ENCODE measurements at regions of chr3 and their contacts with region 1.

Region 1: GRCh38 chr3:184185461-184186308 is at the start of gene ABCF3:
- DNase-seq: peak; percentile 97
- ATAC-seq: peak; percentile 94
- H3K4me3 ChIP-seq: peak within 1 kb of the TSS; percentile 80 to 95 (median 93)
- H3K27ac ChIP-seq: peak within 1 kb of the TSS; percentile 85
- H3K4me1 ChIP-seq: peaks cover 25% of the 10 kb centered on the region
- H3K27me3 ChIP-seq: no peaks in the 10 kb centered on the region; a peak in 1 of 5 replicates
- CTCF ChIP-seq: no peak
- EP300 ChIP-seq: 0 out of 4 replicates have a peak, but pooled peaks of 1 of the 2 experiments have one; percentile 17
- POLR2A ChIP-seq: peak; percentile 82 to 92
- RAD21 ChIP-seq: peak; percentile 46; the same call in 1 of the 2 replicates
- total RNA-seq, gene ABCF3: 32.7 and 38.8 TPM in 2 replicates

Region 2: DNA sequence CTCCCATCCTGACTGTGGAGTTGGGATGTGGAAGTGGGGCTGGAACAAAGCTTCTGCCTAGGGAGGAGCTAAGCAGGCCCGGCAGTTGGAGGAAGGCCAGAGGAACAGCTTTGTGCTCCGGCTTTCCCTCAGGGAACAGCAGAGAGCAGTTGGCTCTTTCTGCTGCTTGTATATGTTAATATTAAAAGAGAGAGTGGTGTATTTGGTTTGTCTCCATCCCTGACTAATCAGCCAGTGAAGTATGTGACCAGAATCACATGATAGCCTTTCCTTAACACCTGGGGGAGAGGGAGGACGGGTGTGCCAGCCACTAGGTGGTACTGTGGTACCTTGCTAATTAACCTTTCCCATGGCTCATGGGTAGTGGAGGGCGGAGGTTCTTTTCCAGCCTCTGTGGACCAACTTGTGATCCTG is 40.6 kb before region 1 on chr3:
- CTCF ChIA-PET with region 1: no interaction called
- POLR2A ChIA-PET with region 1: interaction called, 3 read pairs
- in situ Hi-C with region 1: no loop called
- intact Hi-C with region 1: loop called (anchors 5 kb)
- DNase-seq: peak; percentile 49
- ATAC-seq: peak; percentile 80
- H3K4me3 ChIP-seq: no peak overlapping the region
- H3K27ac ChIP-seq: no peak overlapping the region
- H3K4me1 ChIP-seq: peaks cover 7% of the 10 kb centered on the region
- H3K27me3 ChIP-seq: no peaks in the 10 kb centered on the region
- CTCF ChIP-seq: peak; percentile 81
- EP300 ChIP-seq: no peak
- POLR2A ChIP-seq: peak in 1 of 2 experiments; percentile 20; a peak in 2 of 4 replicates
- RAD21 ChIP-seq: peak; percentile 71

Region 3: GRCh38 chr3:184154885-184155643 is 30.6 kb before region 1 on chr3 and contains the start of gene DVL3:
- CTCF ChIA-PET with region 1: no interaction called
- POLR2A ChIA-PET with region 1: interaction called, 11 read pairs
- in situ Hi-C with region 1: no loop called
- intact Hi-C with region 1: no loop called
- DNase-seq: peak; percentile 50
- ATAC-seq: peak; percentile 68
- H3K4me3 ChIP-seq: peak within 1 kb of the TSS; percentile 77 to 100 (median 99)
- H3K27ac ChIP-seq: peak within 1 kb of the TSS; percentile 96
- H3K4me1 ChIP-seq: peaks cover 37% of the 10 kb centered on the region
- H3K27me3 ChIP-seq: no peaks in the 10 kb centered on the region; a peak in 1 of 5 replicates
- CTCF ChIP-seq: no peak; the same call in 1 of the 2 replicates
- EP300 ChIP-seq: no peak
- POLR2A ChIP-seq: peak in 1 of 2 experiments; percentile 60; a peak in 2 of 4 replicates
- RAD21 ChIP-seq: no peak
- total RNA-seq, gene DVL3: 25.4 and 29.0 TPM in 2 replicates

Region 4: GRCh38 chr3:184174646-184175492 is 10.8 kb before region 1 on chr3 and contains the start of gene AP2M1:
- CTCF ChIA-PET with region 1: no interaction called
- POLR2A ChIA-PET with region 1: interaction called, 23 read pairs
- in situ Hi-C with region 1: no loop called
- intact Hi-C with region 1: no loop called
- DNase-seq: peak; percentile 97
- ATAC-seq: peak; percentile 86
- H3K4me3 ChIP-seq: peak within 1 kb of the TSS; percentile 97 to 99 (median 99)
- H3K27ac ChIP-seq: peak within 1 kb of the TSS; percentile 77
- H3K4me1 ChIP-seq: peaks cover 24% of the 10 kb centered on the region
- H3K27me3 ChIP-seq: no peaks in the 10 kb centered on the region; a peak in 1 of 5 replicates
- CTCF ChIP-seq: peak; percentile 51
- EP300 ChIP-seq: no peak
- POLR2A ChIP-seq: peak; percentile 78 to 97
- RAD21 ChIP-seq: no peak
- total RNA-seq, gene AP2M1: 124 and 126 TPM in 2 replicates

Region 5: GRCh38 chr3:184196536-184196935 is 10.9 kb after region 1 on chr3:
- CTCF ChIA-PET with region 1: no interaction called
- POLR2A ChIA-PET with region 1: interaction called, 14 read pairs
- in situ Hi-C with region 1: no loop called
- intact Hi-C with region 1: no loop called
- DNase-seq: peak; percentile 18
- ATAC-seq: peak; percentile 61
- H3K4me3 ChIP-seq: no peak overlapping the region
- H3K27ac ChIP-seq: no peak overlapping the region
- H3K4me1 ChIP-seq: peaks cover 12% of the 10 kb centered on the region
- H3K27me3 ChIP-seq: no peaks in the 10 kb centered on the region
- CTCF ChIP-seq: no peak
- EP300 ChIP-seq: no peak
- POLR2A ChIP-seq: no peak
- RAD21 ChIP-seq: no peak

Region 6: GRCh38 chr3:184261270-184261853 is 75.7 kb after region 1 on chr3 and contains the start of gene CAMK2N2:
- CTCF ChIA-PET with region 1: no interaction called
- POLR2A ChIA-PET with region 1: no interaction called
- in situ Hi-C with region 1: no loop called
- intact Hi-C with region 1: no loop called
- DNase-seq: peak; percentile 41
- ATAC-seq: peak; percentile 64
- H3K4me3 ChIP-seq: peak within 1 kb of the TSS; percentile 61 to 73 (median 62)
- H3K27ac ChIP-seq: no peak within 1 kb of the TSS
- H3K4me1 ChIP-seq: peaks cover 24% of the 10 kb centered on the region
- H3K27me3 ChIP-seq: peaks cover 3 to 27% of the 10 kb centered on the region in 2 experiments
- CTCF ChIP-seq: no peak
- EP300 ChIP-seq: no peak
- POLR2A ChIP-seq: no peak
- RAD21 ChIP-seq: no peak
- total RNA-seq, gene CAMK2N2: 0.27 TPM in 1 of 2 replicates, not detected in the other

Region 7: DNA sequence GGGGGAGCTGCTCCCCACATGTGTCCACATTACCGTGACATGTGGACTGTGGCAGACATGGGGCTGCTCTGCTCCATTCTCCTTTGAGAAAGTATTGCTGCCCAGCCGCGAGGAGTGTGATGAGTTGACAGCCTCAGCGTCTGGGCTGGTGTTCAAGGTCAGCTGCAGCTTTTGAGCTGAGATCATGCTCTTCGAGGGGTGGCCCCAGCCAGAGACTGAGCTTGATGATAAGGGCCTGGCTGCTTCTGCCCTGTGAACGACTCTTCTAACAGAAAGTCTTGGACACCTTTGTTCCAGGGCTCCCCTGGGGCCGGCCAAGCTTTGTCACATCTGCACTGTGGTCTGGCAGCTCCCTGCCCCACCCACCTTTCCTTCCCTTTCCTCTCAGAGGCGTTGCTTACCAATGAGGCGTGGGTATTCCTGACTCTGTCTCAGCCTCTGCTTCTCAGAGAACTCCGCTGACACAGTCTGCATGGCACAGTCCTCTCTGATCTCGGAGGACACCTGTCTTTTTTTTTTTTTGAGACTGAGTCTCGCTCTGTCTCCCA is 280.8 kb after region 1 on chr3:
- CTCF ChIA-PET with region 1: no interaction called
- POLR2A ChIA-PET with region 1: no interaction called
- in situ Hi-C with region 1: no loop called
- intact Hi-C with region 1: no loop called
- DNase-seq: no peak
- ATAC-seq: peak; percentile 57
- H3K4me3 ChIP-seq: no peak overlapping the region
- H3K27ac ChIP-seq: no peak overlapping the region
- H3K4me1 ChIP-seq: peaks cover 10% of the 10 kb centered on the region
- H3K27me3 ChIP-seq: peaks cover 3 to 22% of the 10 kb centered on the region in 2 experiments; a peak in 2 of 5 replicates
- CTCF ChIP-seq: no peak
- EP300 ChIP-seq: no peak
- POLR2A ChIP-seq: no peak
- RAD21 ChIP-seq: no peak